ENCODE measurements at regions of chr20 and their contacts with region 1.

Region 1: DNA sequence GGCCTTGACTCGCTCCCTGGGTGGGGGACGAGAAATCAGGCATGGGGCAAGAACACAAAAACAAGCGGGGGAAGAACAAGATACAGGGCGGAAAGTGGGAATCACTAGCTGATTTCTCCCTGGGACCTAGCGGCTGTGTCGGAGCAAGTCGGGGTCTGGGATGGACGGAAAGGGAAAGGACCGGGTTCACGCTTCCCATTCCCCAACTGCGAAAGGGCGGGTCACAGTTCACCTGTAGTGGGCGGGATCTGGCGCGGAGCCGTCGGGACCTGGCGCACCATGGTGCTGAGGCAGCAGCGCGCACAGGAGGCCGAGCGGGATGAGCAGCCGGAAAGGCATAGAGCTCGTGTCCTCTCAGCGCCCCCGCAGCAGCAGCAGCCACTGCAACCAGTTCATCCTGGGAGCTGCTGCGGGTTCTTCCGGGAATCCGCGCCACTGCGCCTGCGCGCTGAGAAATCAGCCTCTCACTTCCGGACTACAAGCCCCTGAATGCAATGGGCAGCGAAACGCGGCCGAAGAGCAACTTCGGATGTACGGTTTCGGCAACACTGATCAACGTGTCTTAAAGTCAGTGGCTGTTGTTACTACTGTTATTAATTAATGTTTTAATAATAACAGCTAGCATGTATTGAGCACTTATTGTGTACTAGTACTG is at the start of gene EDEM2:
- DNase-seq: peak; percentile 83
- H3K4me3 ChIP-seq: peak within 1 kb of the TSS; percentile 80
- H3K27me3 ChIP-seq: no peaks in the 10 kb centered on the region
- CTCF ChIP-seq: no peak
- polyA plus RNA-seq, gene EDEM2: 17.7 and 24.7 TPM in 2 replicates

Region 2: DNA sequence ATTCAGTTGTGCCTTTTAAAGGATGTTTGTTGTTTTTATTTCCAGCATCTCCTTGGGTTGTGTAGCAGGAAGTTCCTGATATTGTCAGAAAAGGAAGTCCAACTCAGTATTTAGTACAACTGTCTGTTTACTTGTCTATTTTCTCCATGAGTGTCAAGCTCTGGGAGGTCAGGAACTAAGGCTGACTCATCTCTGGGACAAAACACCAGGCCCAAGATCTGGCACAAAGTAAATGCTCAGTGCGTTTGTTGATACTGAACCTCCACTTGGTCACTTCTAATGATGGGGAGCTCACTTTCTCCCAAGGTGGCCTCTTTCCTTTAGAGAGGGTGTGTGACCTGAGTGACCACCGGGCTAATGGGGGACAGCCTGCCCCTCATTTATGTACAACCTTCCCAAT is 457.6 kb before region 1 on chr20:
- CTCF ChIA-PET with region 1: no interaction called
- POLR2A ChIA-PET with region 1: no interaction called
- DNase-seq: no peak
- H3K4me3 ChIP-seq: no peak overlapping the region
- H3K27me3 ChIP-seq: no peaks in the 10 kb centered on the region
- CTCF ChIP-seq: no peak

Region 3: DNA sequence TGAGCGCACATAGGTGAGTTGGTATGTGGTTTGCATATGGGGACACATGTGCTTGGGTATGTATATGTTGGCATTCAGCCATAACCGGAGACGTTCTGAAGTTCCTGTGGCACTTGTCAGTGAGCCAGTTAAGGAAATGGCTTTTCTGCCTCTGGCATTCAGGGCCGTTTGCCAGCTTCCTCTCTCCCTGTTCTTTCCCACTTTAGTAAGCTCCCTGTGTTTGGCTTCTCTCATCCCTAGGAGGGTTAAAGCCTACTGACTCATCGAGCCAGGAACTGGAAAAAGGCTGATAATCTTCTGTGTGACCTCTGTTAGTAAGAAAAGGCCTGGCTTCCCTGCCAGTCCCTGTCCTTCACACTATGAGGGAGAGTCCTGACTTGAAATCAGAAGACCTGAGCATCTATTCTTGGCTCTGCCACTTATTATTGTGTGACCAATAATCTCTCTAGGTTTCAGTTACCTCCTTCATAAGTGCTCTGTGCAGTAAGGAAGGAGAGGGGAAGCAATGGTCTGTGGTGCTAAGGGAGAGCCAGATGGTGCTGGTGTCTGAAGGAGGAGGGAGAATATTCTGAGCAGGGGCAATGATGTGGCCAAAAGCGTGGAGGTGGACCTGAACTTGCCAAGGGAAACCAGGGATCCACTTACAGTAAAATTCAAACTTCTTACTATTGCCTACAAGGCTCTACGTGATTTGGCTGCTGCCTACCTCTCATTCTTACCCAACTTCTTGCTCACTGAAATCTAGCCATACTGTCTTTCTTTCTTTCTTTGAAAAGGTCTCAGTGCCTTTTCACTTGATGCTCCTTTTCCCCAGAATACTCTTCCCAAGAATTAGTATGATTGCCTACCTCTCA is 239.2 kb before region 1 on chr20:
- CTCF ChIA-PET with region 1: no interaction called
- POLR2A ChIA-PET with region 1: no interaction called
- DNase-seq: peak; percentile 75
- H3K4me3 ChIP-seq: no peak overlapping the region
- H3K27me3 ChIP-seq: no peaks in the 10 kb centered on the region
- CTCF ChIP-seq: no peak

Region 4: GRCh38 chr20:35207950-35208611 is 61.0 kb after region 1 on chr20:
- CTCF ChIA-PET with region 1: interaction called, 48 read pairs
- POLR2A ChIA-PET with region 1: no interaction called
- DNase-seq: no peak
- H3K4me3 ChIP-seq: no peak overlapping the region
- H3K27me3 ChIP-seq: no peaks in the 10 kb centered on the region
- CTCF ChIP-seq: peak; percentile 74

Region 5: GRCh38 chr20:35269055-35269781 is 122.2 kb after region 1 on chr20:
- CTCF ChIA-PET with region 1: interaction called, 13 read pairs
- POLR2A ChIA-PET with region 1: no interaction called
- DNase-seq: no peak
- H3K4me3 ChIP-seq: no peak overlapping the region
- H3K27me3 ChIP-seq: no peaks in the 10 kb centered on the region
- CTCF ChIP-seq: peak; percentile 89

Measured in BJ (cell line).